K562 (cell line): ENCODE measurements at regions of chr10 and their contacts with region 1.

Region 1: GRCh38 chr10:70758757-70759514 is 26.2 kb downstream of the TBATA start:
- DNase-seq: peak; percentile 78 to 89 (median 84)
- ATAC-seq: peak; percentile 78
- H3K4me3 ChIP-seq: no peak overlapping the region
- H3K27ac ChIP-seq: no peak overlapping the region
- H3K4me1 ChIP-seq: peaks cover 25 to 28% of the 10 kb centered on the region in 2 experiments
- H3K27me3 ChIP-seq: no peaks in the 10 kb centered on the region
- CTCF ChIP-seq: peak; percentile 80 to 91 (median 83)
- EP300 ChIP-seq: peak; percentile 30; the same call in 1 of the 2 replicates
- POLR2A ChIP-seq: no peak
- RAD21 ChIP-seq: peak; percentile 60 to 86

Region 2: DNA sequence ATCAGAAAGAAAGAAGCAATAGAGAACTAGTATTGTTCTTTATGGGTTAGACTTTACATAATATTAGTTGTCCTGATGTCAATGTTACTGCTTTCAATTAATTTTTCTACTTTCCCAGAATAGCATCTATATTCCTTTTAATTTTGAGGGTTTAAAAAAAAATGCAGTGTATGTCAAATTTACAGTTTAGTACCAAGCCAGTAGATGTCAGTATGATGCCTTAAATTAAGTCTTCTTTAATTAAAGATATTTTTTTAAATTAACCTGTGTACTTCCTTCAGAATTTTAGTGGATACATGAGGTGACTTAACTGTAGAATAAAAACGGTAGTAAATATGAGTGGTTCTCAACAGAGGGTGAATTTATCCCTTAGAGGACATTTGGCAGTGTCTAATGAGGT is 1966.8 kb before region 1 on chr10:
- CTCF ChIA-PET with region 1: no interaction called
- POLR2A ChIA-PET with region 1: no interaction called
- in situ Hi-C with region 1: loop called (anchors 10 kb)
- intact Hi-C with region 1: no loop called
- DNase-seq: no peak
- ATAC-seq: no peak
- H3K4me3 ChIP-seq: no peak overlapping the region
- H3K27ac ChIP-seq: no peak overlapping the region
- H3K4me1 ChIP-seq: no peaks in the 10 kb centered on the region
- H3K27me3 ChIP-seq: no peaks in the 10 kb centered on the region
- CTCF ChIP-seq: peak in 2 of 3 experiments; percentile 12 to 51; a peak in 3 of 6 replicates
- EP300 ChIP-seq: no peak
- POLR2A ChIP-seq: no peak
- RAD21 ChIP-seq: peak; percentile 35 to 53; a peak in 3 of 4 replicates

Region 3: DNA sequence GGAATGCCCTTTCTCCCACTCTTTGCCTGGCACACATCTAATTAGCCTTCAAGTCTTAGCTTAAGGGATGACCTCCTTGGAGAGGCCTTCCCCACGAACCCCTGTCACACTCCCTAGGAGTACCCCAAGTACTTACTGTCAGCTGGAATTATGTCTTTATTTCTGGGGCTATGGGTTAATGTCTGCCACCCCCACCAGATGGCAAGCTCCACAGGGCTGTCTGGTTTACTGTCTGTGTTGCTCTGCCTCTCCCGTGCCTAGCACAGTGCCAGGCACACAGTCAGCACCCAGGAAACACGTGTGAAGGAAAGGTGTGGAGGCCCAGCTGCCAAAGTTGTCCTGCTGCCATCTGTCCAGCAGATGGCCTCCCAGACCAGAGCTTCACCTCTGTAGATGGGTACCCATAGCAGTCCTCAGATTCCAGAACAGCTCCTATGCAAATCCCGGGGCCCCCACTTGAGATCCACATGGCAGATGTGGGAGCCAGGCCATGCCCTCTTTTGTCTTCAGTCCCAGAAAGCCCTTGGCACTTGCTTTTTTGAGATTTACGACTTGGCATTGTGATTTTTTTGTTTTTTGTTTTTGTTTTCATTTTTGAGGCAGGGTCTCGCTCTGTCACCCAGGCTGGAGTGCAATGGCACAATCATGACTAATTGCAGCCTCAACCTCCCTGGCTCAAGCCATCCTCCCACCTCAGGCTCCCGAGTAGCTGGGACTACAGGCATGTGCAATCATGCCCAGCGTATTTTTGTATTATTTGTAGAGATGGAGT is 297.5 kb before region 1 on chr10:
- CTCF ChIA-PET with region 1: no interaction called
- POLR2A ChIA-PET with region 1: no interaction called
- in situ Hi-C with region 1: no loop called
- intact Hi-C with region 1: loop called (anchors 5 kb)
- DNase-seq: peak; percentile 81 to 86 (median 83)
- ATAC-seq: peak; percentile 90
- H3K4me3 ChIP-seq: no peak overlapping the region
- H3K27ac ChIP-seq: no peak overlapping the region
- H3K4me1 ChIP-seq: peaks cover 5 to 15% of the 10 kb centered on the region in 2 experiments; a peak in 3 of 5 replicates
- H3K27me3 ChIP-seq: peaks cover 49 to 73% of the 10 kb centered on the region in 2 experiments
- CTCF ChIP-seq: peak; percentile 92 to 95 (median 94)
- EP300 ChIP-seq: no peak
- POLR2A ChIP-seq: no peak
- RAD21 ChIP-seq: peak; percentile 84 to 95

Region 4: GRCh38 chr10:70549962-70550458 is 208.9 kb before region 1 on chr10:
- CTCF ChIA-PET with region 1: interaction called, 31 read pairs
- POLR2A ChIA-PET with region 1: interaction called, 4 read pairs
- in situ Hi-C with region 1: loop called (anchors 5 kb)
- intact Hi-C with region 1: loop called (anchors 1 kb)
- DNase-seq: peak; percentile 82 to 87 (median 84)
- ATAC-seq: peak; percentile 97
- H3K4me3 ChIP-seq: no peak overlapping the region
- H3K27ac ChIP-seq: no peak overlapping the region
- H3K4me1 ChIP-seq: peaks cover 8 to 13% of the 10 kb centered on the region in 2 experiments
- H3K27me3 ChIP-seq: no peaks in the 10 kb centered on the region
- CTCF ChIP-seq: peak; percentile 92 to 96 (median 95)
- EP300 ChIP-seq: no peak
- POLR2A ChIP-seq: no peak
- RAD21 ChIP-seq: peak; percentile 98 to 99

Region 5: DNA sequence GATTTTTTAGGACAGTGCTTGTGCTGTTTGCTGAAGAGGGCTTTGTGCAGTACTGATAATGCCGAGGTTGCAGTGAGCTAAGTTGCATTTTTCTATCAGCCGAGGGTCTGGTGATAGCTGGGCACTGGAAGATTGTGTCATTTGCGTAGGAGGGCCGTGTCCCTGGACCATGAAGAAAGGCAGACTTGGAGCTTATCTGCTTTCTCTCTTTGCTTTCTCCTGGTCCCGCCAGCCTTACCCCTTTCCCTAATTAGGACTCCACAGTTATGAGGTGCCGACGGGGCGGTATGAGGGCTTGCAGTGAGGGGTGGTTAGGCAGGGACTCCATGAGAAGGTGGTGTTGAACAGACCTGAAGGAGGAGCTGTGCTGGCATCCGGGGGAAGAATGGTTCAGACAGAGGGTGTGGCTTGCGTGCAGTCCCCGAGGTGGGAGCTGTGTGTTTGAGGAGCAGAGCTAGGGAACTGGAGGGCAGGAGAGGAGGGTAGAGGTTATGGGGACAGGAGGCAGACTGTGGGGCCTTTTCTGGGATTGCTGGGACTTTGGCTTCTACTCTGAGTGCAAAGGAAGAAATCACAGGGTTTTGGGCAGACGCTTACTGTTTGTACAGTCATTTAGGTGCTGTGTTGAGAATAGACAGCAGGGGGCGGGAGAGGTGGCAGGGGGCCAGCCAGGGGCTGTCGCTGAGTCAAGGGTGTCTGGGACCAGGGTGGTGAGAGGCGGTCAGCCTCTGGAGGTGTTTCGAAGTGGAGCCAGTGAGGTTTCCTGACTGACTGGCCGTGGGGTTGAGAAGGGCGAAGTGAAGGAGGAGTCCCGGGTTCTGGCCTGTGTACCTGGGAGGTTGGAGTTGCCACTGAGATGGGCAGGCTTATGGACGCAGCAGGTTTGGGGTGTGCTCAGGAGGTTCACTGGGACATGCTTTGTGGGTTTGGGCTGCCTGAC is 199.8 kb before region 1 on chr10:
- CTCF ChIA-PET with region 1: interaction called, 15 read pairs
- POLR2A ChIA-PET with region 1: interaction called, 3 read pairs
- in situ Hi-C with region 1: loop called (anchors 5 kb)
- intact Hi-C with region 1: loop called (anchors 1 kb)
- DNase-seq: peak; percentile 91 to 94 (median 93)
- ATAC-seq: peak; percentile 94
- H3K4me3 ChIP-seq: peak overlapping the region; percentile 31
- H3K27ac ChIP-seq: peak overlapping the region; percentile 76
- H3K4me1 ChIP-seq: peaks cover 25 to 54% of the 10 kb centered on the region in 2 experiments
- H3K27me3 ChIP-seq: no peaks in the 10 kb centered on the region
- CTCF ChIP-seq: peak; percentile 82 to 93 (median 88)
- EP300 ChIP-seq: peak; percentile 89
- POLR2A ChIP-seq: no peak
- RAD21 ChIP-seq: peak; percentile 83 to 87

Region 6: DNA sequence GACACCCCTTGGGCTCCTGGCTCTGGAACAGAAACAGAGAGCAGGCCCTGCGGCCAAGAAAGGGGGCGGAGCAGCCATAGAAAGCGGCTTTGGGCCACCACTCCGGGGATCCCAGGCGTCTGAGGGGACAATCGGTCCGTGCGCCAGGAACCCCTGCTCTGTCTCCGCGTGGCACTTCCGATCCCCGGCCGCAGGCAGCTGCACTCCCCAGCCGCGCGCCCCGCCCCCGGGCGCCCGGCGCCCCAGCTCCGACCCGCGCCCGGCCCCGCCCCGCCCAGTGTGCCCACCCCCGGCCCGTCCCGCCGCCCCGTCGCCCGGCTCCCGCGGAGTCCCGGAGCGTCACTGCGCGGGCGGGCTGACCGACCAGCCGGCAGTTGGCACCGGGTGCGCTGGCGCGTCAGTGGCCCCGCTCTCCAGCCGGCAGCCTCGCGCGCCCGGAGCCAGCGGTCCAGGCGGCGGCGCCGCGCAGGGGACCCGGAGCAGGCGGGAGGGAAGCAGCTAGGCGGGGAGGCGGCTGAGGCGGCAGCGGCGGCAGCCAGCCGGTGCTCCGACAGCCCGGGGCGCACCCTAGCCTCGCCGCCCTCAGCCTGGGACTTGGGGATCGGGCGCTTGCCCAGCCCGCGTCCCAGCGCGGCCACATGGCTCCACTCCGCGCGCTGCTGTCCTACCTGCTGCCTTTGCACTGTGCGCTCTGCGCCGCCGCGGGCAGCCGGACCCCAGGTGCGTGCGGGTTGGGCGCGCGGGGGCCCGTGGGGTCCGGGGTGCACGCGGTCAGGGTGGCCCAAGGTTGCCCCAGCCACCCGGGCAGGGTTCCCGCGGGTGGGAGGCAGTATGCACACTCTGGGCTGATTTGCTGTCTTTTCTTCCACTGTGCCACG is 86.5 kb before region 1 on chr10 and contains the start of gene ADAMTS14:
- CTCF ChIA-PET with region 1: no interaction called
- POLR2A ChIA-PET with region 1: no interaction called
- in situ Hi-C with region 1: no loop called
- intact Hi-C with region 1: loop called (anchors 2 kb)
- DNase-seq: peak; percentile 86 to 97 (median 92)
- ATAC-seq: peak; percentile 61
- H3K4me3 ChIP-seq: peak within 1 kb of the TSS; percentile 62
- H3K27ac ChIP-seq: peak within 1 kb of the TSS; percentile 82
- H3K4me1 ChIP-seq: peaks cover 80 to 89% of the 10 kb centered on the region in 2 experiments
- H3K27me3 ChIP-seq: no peaks in the 10 kb centered on the region
- CTCF ChIP-seq: no peak
- EP300 ChIP-seq: no peak
- POLR2A ChIP-seq: no peak; the same call in 1 of the 2 replicates
- RAD21 ChIP-seq: no peak; a peak in 1 of 4 replicates
- polyA plus RNA-seq, gene ADAMTS14: 0.04 to 0.27 TPM